WTC11 (cell line): ENCODE measurements at regions of chr19 and their contacts with region 1.

Region 1: GRCh38 chr19:47348819-47349795 is at the start of gene DHX34:
- DNase-seq: peak; percentile 99
- ATAC-seq: peak; percentile 97
- H3K4me3 Mint-ChIP-seq: peak within 1 kb of the TSS; percentile 92
- H3K27ac Mint-ChIP-seq: peak within 1 kb of the TSS; percentile 86
- H3K4me1 Mint-ChIP-seq: peaks cover 29% of the 10 kb centered on the region
- H3K27me3 Mint-ChIP-seq: peaks cover 14% of the 10 kb centered on the region
- CTCF ChIP-seq: peak; percentile 99
- total RNA-seq, gene DHX34: 35.6 to 36.5 TPM (median 35.6 TPM) in 3 replicates

Region 2: GRCh38 chr19:47094557-47095475 is 254.3 kb before region 1 on chr19:
- CTCF ChIA-PET with region 1: no interaction called
- POLR2A ChIA-PET with region 1: no interaction called
- DNase-seq: no peak
- ATAC-seq: no peak
- H3K4me3 Mint-ChIP-seq: no peak overlapping the region
- H3K27ac Mint-ChIP-seq: peak overlapping the region; percentile 58
- H3K4me1 Mint-ChIP-seq: peaks cover 44% of the 10 kb centered on the region
- H3K27me3 Mint-ChIP-seq: no peaks in the 10 kb centered on the region
- CTCF ChIP-seq: no peak

Region 3: GRCh38 chr19:47256688-47257443 is 92.2 kb before region 1 on chr19:
- CTCF ChIA-PET with region 1: interaction called, 12 read pairs
- POLR2A ChIA-PET with region 1: interaction called, 8 read pairs
- DNase-seq: peak; percentile 100
- ATAC-seq: peak; percentile 86
- H3K4me3 Mint-ChIP-seq: peak overlapping the region; percentile 87
- H3K27ac Mint-ChIP-seq: peak overlapping the region; percentile 97
- H3K4me1 Mint-ChIP-seq: peaks cover 12% of the 10 kb centered on the region
- H3K27me3 Mint-ChIP-seq: peaks cover 19% of the 10 kb centered on the region
- CTCF ChIP-seq: no peak

Region 4: GRCh38 chr19:47296036-47296435 is 53.1 kb before region 1 on chr19:
- CTCF ChIA-PET with region 1: interaction called, 17 read pairs
- POLR2A ChIA-PET with region 1: interaction called, 3 read pairs
- DNase-seq: peak; percentile 88
- ATAC-seq: peak; percentile 97
- H3K4me3 Mint-ChIP-seq: no peak overlapping the region
- H3K27ac Mint-ChIP-seq: no peak overlapping the region
- H3K4me1 Mint-ChIP-seq: peaks cover 7% of the 10 kb centered on the region
- H3K27me3 Mint-ChIP-seq: no peaks in the 10 kb centered on the region
- CTCF ChIP-seq: peak; percentile 80

Region 5: GRCh38 chr19:47324502-47324901 is 24.6 kb before region 1 on chr19:
- CTCF ChIA-PET with region 1: interaction called, 20 read pairs
- POLR2A ChIA-PET with region 1: no interaction called
- DNase-seq: no peak
- ATAC-seq: no peak
- H3K4me3 Mint-ChIP-seq: no peak overlapping the region
- H3K27ac Mint-ChIP-seq: no peak overlapping the region
- H3K4me1 Mint-ChIP-seq: no peaks in the 10 kb centered on the region
- H3K27me3 Mint-ChIP-seq: no peaks in the 10 kb centered on the region
- CTCF ChIP-seq: no peak

Region 6: GRCh38 chr19:47381653-47382279 is 32.7 kb after region 1 on chr19:
- CTCF ChIA-PET with region 1: interaction called, 10 read pairs
- POLR2A ChIA-PET with region 1: interaction called, 4 read pairs
- DNase-seq: no peak
- ATAC-seq: no peak
- H3K4me3 Mint-ChIP-seq: no peak overlapping the region
- H3K27ac Mint-ChIP-seq: no peak overlapping the region
- H3K4me1 Mint-ChIP-seq: peaks cover 7% of the 10 kb centered on the region; the same call in 1 of the 2 replicates
- H3K27me3 Mint-ChIP-seq: no peaks in the 10 kb centered on the region
- CTCF ChIP-seq: no peak

Region 7: DNA sequence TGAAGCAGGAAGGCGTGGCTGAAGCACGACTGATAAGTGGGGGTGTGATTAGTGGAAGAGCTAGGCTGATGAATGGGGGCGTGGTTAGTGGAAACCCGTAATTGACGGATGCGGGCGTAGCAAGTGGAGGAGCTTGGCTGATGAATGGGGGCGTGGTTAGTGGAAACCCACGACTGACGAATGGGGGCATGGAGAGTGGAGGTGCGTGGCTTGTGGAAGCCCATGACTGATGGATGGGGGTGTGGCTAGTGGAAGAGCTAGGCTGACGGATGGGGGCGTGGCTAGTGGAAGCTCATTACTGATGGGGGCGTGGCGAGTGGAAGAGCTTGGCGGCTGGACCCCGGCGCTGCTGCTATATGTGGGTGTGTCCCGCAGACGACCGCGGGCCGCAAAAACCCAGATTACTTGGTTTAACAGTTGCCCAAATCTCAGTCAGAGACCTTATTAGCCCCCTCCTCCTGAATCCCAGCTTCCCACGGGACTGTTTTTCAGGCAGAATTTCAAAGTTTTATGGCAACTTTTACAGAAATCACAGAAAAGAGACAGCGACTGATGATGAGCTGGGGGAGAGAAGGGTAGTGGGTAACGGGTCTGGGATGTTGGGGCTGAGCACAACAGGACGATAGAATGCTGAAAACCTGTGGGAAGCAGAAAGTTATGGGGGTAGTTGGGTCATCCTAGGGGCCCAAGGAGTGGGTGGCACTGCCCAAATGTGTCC is 79.2 kb after region 1 on chr19:
- CTCF ChIA-PET with region 1: interaction called, 48 read pairs
- POLR2A ChIA-PET with region 1: no interaction called
- DNase-seq: peak; percentile 97
- ATAC-seq: peak; percentile 75
- H3K4me3 Mint-ChIP-seq: no peak overlapping the region
- H3K27ac Mint-ChIP-seq: no peak overlapping the region
- H3K4me1 Mint-ChIP-seq: peaks cover 13% of the 10 kb centered on the region
- H3K27me3 Mint-ChIP-seq: peaks cover 80% of the 10 kb centered on the region
- CTCF ChIP-seq: no peak

Region 8: GRCh38 chr19:47494729-47495128 is 145.6 kb after region 1 on chr19:
- CTCF ChIA-PET with region 1: no interaction called
- POLR2A ChIA-PET with region 1: no interaction called
- DNase-seq: no peak
- ATAC-seq: no peak
- H3K4me3 Mint-ChIP-seq: no peak overlapping the region
- H3K27ac Mint-ChIP-seq: no peak overlapping the region
- H3K4me1 Mint-ChIP-seq: peaks cover 10% of the 10 kb centered on the region
- H3K27me3 Mint-ChIP-seq: no peaks in the 10 kb centered on the region
- CTCF ChIP-seq: no peak